Activated CD8-positive, alpha-beta memory T cell treated with anti-CD3 and anti-CD28 coated beads, Interleukin-2, amount 10 ng/mL, durations not matched to agents 7 days and 5 days (primary cell): ENCODE measurements at regions of chr6 and their contacts with region 1.

Region 1: GRCh38 chr6:43143235-43144124 is 27.6 kb upstream of the SRF start:
- DNase-seq: peak; percentile 85
- ATAC-seq: peak; percentile 97
- H3K4me3 Mint-ChIP-seq: no peak overlapping the region
- H3K27ac Mint-ChIP-seq: peak overlapping the region; percentile 50
- H3K4me1 Mint-ChIP-seq: peaks cover 18% of the 10 kb centered on the region
- H3K27me3 Mint-ChIP-seq: peaks cover 3% of the 10 kb centered on the region

Region 2: GRCh38 chr6:41670703-41671360 is 1472.6 kb before region 1 on chr6:
- CTCF ChIA-PET with region 1: no interaction called
- DNase-seq: no peak
- ATAC-seq: no peak
- H3K4me3 Mint-ChIP-seq: no peak overlapping the region
- H3K27ac Mint-ChIP-seq: no peak overlapping the region
- H3K4me1 Mint-ChIP-seq: no peaks in the 10 kb centered on the region
- H3K27me3 Mint-ChIP-seq: peaks cover 32% of the 10 kb centered on the region

Region 3: GRCh38 chr6:42901536-42901957 is 241.9 kb before region 1 on chr6:
- CTCF ChIA-PET with region 1: interaction called, 63 read pairs
- DNase-seq: peak; percentile 81
- ATAC-seq: peak; percentile 99
- H3K4me3 Mint-ChIP-seq: no peak overlapping the region
- H3K27ac Mint-ChIP-seq: no peak overlapping the region
- H3K4me1 Mint-ChIP-seq: peaks cover 15% of the 10 kb centered on the region
- H3K27me3 Mint-ChIP-seq: no peaks in the 10 kb centered on the region

Region 4: GRCh38 chr6:43005844-43006243 is 137.6 kb before region 1 on chr6:
- CTCF ChIA-PET with region 1: interaction called, 15 read pairs
- DNase-seq: no peak
- ATAC-seq: no peak
- H3K4me3 Mint-ChIP-seq: no peak overlapping the region
- H3K27ac Mint-ChIP-seq: no peak overlapping the region
- H3K4me1 Mint-ChIP-seq: no peaks in the 10 kb centered on the region
- H3K27me3 Mint-ChIP-seq: no peaks in the 10 kb centered on the region

Region 5: DNA sequence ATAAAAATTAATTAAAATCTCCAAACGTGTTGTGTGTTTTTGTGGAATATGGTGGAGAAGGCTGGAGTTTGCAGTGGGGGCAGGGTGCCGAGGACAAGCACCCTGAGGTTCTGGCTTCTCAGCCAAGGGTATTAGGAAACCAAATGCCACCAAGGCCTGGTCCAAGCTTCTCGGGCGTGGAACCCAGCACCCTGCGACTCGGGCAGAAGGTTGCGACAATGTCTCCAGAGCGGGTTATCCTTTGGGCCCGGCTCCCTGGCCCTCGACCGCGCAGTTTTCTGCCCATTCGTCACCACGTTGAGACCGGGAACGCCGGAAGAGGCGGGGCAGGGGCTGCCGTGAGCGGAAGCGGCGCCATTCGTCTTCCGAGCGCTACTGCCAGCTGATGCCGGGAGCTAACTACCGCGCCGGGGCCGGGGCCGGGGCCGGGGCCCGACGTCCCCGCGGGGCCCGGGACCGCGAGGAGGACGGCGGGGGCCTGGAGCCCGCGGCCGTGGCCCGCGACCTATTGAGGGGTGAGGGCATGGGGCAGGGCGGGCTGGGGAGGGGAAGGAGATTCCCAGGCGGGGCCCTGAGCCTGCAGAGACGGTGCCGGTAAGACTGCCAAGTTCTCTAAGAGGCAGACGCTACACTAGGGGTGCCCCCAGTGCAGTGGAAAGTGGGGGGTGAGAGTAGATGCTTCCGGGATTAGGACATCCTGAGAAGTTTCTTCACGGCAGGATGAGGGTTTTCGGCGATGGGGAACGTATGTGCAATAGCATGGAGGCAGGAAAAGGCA is 122.0 kb before region 1 on chr6 and contains the start of gene RRP36:
- CTCF ChIA-PET with region 1: interaction called, 12 read pairs
- DNase-seq: peak; percentile 70
- ATAC-seq: peak; percentile 90
- H3K4me3 Mint-ChIP-seq: peak within 1 kb of the TSS; percentile 97
- H3K27ac Mint-ChIP-seq: peak within 1 kb of the TSS; percentile 91
- H3K4me1 Mint-ChIP-seq: peaks cover 33% of the 10 kb centered on the region
- H3K27me3 Mint-ChIP-seq: no peaks in the 10 kb centered on the region
- total RNA-seq, gene RRP36: 60.9 to 71.8 TPM

Region 6: GRCh38 chr6:43059168-43060033 is 84.1 kb before region 1 on chr6 and contains the starts of genes KLC4 and MRPL2:
- CTCF ChIA-PET with region 1: interaction called, 11 read pairs
- DNase-seq: peak; percentile 99
- ATAC-seq: peak; percentile 95
- H3K4me3 Mint-ChIP-seq: peak within 1 kb of the TSS; percentile 92
- H3K27ac Mint-ChIP-seq: peak within 1 kb of the TSS; percentile 99
- H3K4me1 Mint-ChIP-seq: peaks cover 27% of the 10 kb centered on the region
- H3K27me3 Mint-ChIP-seq: no peaks in the 10 kb centered on the region
- total RNA-seq, gene KLC4: 15.1 to 16.4 TPM
- total RNA-seq, gene MRPL2: 64.2 to 71.0 TPM

Region 7: GRCh38 chr6:43159599-43159998 is 16.1 kb after region 1 on chr6:
- CTCF ChIA-PET with region 1: interaction called, 18 read pairs
- DNase-seq: no peak
- ATAC-seq: no peak
- H3K4me3 Mint-ChIP-seq: no peak overlapping the region
- H3K27ac Mint-ChIP-seq: no peak overlapping the region
- H3K4me1 Mint-ChIP-seq: no peaks in the 10 kb centered on the region
- H3K27me3 Mint-ChIP-seq: no peaks in the 10 kb centered on the region

Region 8: GRCh38 chr6:43228951-43229802 is 85.7 kb after region 1 on chr6 and contains the start of gene DNPH1:
- CTCF ChIA-PET with region 1: interaction called, 10 read pairs
- DNase-seq: peak; percentile 81
- ATAC-seq: peak; percentile 92
- H3K4me3 Mint-ChIP-seq: peak within 1 kb of the TSS; percentile 84
- H3K27ac Mint-ChIP-seq: peak within 1 kb of the TSS; percentile 85
- H3K4me1 Mint-ChIP-seq: peaks cover 43% of the 10 kb centered on the region
- H3K27me3 Mint-ChIP-seq: peaks cover 12% of the 10 kb centered on the region
- total RNA-seq, gene DNPH1: 54.0 to 60.0 TPM